ENCODE measurements at regions of chr7 and their contacts with region 1.

Region 1: DNA sequence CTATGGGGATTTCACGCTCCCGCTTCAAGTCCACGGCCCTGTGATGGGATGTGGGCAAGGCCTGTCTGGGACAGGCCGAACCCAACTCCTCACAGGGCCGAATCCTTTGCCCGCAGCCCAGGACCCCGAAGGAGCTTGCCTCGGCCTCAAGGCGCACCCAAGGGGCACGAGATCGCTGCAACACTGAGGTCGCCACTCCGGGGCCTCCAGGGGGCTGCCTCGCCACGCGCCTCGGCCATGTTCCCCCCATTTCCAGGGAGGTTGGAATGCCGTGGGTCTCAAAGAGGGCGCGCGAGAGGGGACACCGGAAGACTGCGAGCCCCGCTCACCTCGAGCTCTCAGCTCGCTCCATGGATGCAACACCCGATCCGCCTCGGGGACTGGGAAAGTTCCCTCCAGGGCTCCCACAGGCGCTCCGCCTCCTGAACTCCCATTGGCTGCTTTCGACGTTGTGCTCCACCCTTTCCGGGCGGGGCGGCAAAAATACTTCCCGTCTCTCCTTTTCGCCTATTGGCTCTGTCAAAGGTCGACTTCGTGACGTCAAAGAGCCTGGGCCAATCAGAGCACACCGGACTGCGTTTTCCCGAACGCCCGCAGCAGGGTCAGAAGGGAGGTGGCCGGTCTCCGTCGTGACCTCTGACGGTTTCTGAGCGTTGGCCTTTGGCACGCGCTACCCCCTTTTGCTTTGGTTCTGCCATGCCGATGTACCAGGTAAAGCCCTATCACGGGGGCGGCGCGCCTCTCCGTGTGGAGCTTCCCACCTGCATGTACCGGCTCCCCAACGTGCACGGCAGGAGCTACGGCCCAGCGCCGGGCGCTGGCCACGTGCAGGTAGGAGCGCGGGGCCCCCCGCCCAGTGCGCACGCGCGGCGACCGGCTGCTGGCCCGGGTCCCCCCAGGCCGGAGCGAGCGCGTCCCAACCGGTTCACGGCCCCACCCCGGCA is at the starts of genes AIMP2 and PMS2:
- DNase-seq: peak; percentile 95 to 96 (median 96)
- H3K4me3 ChIP-seq: peak within 1 kb of the TSS; percentile 66 to 92 (median 84)
- H3K27ac ChIP-seq: peak within 1 kb of the TSS; percentile 61 to 81
- H3K4me1 ChIP-seq: peaks cover 2 to 19% (median 15%) of the 10 kb centered on the region in 4 experiments
- H3K27me3 ChIP-seq: no peaks in the 10 kb centered on the region

Region 2: DNA sequence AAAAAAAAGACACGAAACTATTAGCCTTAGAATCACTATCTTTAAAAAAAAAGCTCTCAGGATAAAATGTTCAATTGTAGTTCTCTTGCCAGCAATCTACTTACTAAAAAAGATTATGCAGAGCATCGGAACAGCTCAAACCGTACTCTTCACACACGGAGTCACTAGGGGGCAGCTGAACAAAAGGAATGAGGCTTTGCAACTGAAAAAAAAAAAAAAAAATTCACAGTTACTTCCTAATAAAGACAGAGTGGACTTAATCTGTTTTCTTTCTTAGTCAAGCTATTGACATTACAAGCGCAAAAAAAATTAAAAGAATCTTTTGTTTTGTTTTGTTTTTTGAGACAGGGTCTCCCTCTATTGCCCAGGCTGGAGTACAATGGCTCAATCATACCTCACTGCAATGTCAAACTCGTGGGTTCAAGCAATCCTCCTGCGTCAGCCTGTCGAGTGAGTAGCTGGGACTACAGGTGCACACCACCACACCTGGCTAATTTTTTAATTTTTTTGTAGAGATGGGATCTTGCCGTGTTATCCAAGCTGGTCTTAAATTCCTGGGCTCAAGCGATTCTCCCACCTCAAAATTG is 11.6 kb before region 1 on chr7:
- CTCF ChIA-PET with region 1: interaction called, 20 read pairs
- POLR2A ChIA-PET with region 1: no interaction called
- DNase-seq: peak; percentile 73 to 88 (median 84)
- H3K4me3 ChIP-seq: no peak overlapping the region
- H3K27ac ChIP-seq: no peak overlapping the region
- H3K4me1 ChIP-seq: no peaks in the 10 kb centered on the region
- H3K27me3 ChIP-seq: no peaks in the 10 kb centered on the region

Region 3: GRCh38 chr7:6026011-6026819 is 17.3 kb after region 1 on chr7:
- CTCF ChIA-PET with region 1: no interaction called
- POLR2A ChIA-PET with region 1: no interaction called
- DNase-seq: peak; percentile 67 to 90 (median 88)
- H3K4me3 ChIP-seq: peak overlapping the region in 5 of 7 experiments; percentile 6 to 59 (median 47)
- H3K27ac ChIP-seq: peak overlapping the region; percentile 13 to 81
- H3K4me1 ChIP-seq: peaks cover 7 to 28% (median 19%) of the 10 kb centered on the region in 4 experiments
- H3K27me3 ChIP-seq: no peaks in the 10 kb centered on the region

Region 4: DNA sequence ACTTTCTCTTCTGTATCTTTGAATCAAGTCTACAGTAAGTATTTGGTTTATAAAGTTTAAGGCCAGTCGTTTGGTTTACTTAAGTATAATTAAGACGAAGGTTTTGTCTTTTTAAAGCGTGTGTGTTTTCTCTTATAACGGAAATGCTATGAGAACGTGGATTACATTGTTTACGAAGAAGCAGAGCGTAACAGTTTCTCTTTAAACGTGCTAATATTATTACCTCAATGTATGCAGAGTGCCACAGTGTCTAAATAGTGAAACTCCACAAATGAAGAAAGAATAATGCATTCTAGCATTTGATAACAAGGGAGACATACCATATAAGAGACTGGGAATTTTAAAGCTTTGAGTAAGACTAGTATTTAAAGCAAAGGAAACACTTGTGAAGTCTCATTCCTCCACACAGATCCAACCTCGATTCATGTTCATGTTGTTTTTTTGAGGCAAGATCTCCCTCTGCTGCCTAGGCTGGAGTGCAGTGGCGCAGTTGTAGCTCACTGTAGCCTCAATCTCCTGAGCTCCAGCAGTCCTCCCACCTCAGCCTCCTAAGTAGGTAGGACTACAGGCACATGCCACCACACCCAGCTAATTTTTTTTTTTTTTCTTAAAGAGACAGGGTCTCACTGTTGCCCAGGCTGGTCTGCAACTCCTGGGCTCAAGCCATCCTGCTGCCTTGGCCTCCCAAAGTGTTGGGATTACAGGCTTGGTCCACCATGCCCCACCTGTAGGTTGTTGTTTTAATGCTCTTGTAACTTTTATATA is 97.4 kb after region 1 on chr7:
- CTCF ChIA-PET with region 1: interaction called, 13 read pairs
- POLR2A ChIA-PET with region 1: no interaction called
- DNase-seq: peak; percentile 44 to 62 (median 59)
- H3K4me3 ChIP-seq: peak overlapping the region in 6 of 7 experiments; percentile 78 to 98 (median 89)
- H3K27ac ChIP-seq: peak overlapping the region; percentile 38 to 89
- H3K4me1 ChIP-seq: peaks cover 4 to 16% (median 10%) of the 10 kb centered on the region in 4 experiments
- H3K27me3 ChIP-seq: no peaks in the 10 kb centered on the region

Region 5: GRCh38 chr7:6228361-6229229 is 219.7 kb after region 1 on chr7:
- CTCF ChIA-PET with region 1: no interaction called
- POLR2A ChIA-PET with region 1: no interaction called
- DNase-seq: peak; percentile 87 to 98 (median 96)
- H3K4me3 ChIP-seq: peak overlapping the region in 6 of 7 experiments; percentile 27 to 68 (median 47)
- H3K27ac ChIP-seq: peak overlapping the region; percentile 56 to 78
- H3K4me1 ChIP-seq: peaks cover 31 to 45% (median 35%) of the 10 kb centered on the region in 4 experiments
- H3K27me3 ChIP-seq: no peaks in the 10 kb centered on the region